ENCODE measurements at regions of chr6 and their contacts with region 1.

Region 1: DNA sequence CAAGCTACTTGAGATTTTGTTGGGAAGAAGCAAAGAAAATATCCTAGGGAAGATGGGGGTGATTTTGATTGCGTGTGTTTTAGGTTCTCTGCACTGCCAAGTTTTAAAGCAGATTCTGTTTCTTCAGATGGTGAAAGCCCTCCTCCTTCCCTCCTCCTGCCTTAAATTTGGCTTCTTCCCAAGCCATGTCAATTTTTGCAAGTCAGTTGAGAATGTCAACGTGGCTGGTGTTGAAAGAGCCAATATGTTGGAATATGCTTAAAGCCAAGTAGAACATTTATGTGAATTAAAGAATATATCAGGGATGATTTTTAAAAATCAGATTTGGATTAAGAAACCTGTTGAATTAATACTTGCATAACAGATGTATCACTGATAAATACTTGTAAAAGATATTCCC is 270.8 kb downstream of the ARID1B start:
- DNase-seq: no peak
- H3K4me3 ChIP-seq: no peak overlapping the region
- H3K4me3 Mint-ChIP-seq: no peak overlapping the region
- H3K27ac ChIP-seq: peak overlapping the region in 1 of 2 donors; percentile 1
- H3K27ac Mint-ChIP-seq: peak overlapping the region in 1 of 7 donors; percentile 50
- H3K4me1 ChIP-seq: peaks cover 5 to 7% of the 10 kb centered on the region in 2 donors
- H3K4me1 Mint-ChIP-seq: peaks cover 13% of the 10 kb centered on the region
- H3K27me3 ChIP-seq: no peaks in the 10 kb centered on the region
- H3K27me3 Mint-ChIP-seq: no peaks in the 10 kb centered on the region
- CTCF ChIP-seq: no peak

Region 2: DNA sequence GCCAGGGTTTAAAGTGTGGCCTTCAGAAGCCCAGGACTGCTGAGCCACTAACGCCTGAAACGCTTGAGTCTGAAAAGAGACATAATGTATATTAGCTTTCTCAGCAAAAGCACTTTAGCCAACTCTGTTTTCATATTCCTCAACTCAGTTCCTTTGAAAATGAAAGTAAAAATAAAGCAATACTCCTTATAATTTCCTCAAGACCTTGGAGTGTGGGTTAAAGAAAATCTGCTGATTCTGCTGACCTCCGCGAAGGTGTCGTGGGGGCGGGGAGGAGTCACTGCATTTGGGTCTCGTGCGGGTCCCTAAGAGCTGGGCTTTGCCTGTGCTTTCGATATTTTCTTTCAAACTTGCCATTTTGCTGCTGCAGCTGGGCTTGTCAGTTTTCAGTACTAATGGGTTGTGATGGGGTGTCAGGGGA is 413.0 kb before region 1 on chr6:
- intact Hi-C with region 1: no loop called
- DNase-seq: no peak
- H3K4me3 ChIP-seq: peak overlapping the region; percentile 0 to 60 (median 27)
- H3K4me3 Mint-ChIP-seq: peak overlapping the region; percentile 74 to 91
- H3K27ac ChIP-seq: peak overlapping the region in 1 of 2 donors; percentile 46
- H3K27ac Mint-ChIP-seq: peak overlapping the region in 3 of 7 donors; percentile 50 to 81 (median 51)
- H3K4me1 ChIP-seq: peaks cover 0 to 15% of the 10 kb centered on the region in 2 donors
- H3K4me1 Mint-ChIP-seq: peaks cover 16% of the 10 kb centered on the region
- H3K27me3 ChIP-seq: no peaks in the 10 kb centered on the region
- H3K27me3 Mint-ChIP-seq: peaks cover 0 to 2% (median 0%) of the 10 kb centered on the region in 3 donors
- CTCF ChIP-seq: no peak

Region 3: GRCh38 chr6:157029980-157030690 is 17.8 kb before region 1 on chr6:
- intact Hi-C with region 1: loop called in 1 of 2 experiments (anchors 1 kb)
- DNase-seq: no peak
- H3K4me3 ChIP-seq: no peak overlapping the region
- H3K4me3 Mint-ChIP-seq: no peak overlapping the region
- H3K27ac ChIP-seq: no peak overlapping the region
- H3K27ac Mint-ChIP-seq: no peak overlapping the region
- H3K4me1 ChIP-seq: peaks cover 2 to 18% of the 10 kb centered on the region in 2 donors
- H3K4me1 Mint-ChIP-seq: peaks cover 16% of the 10 kb centered on the region
- H3K27me3 ChIP-seq: no peaks in the 10 kb centered on the region
- H3K27me3 Mint-ChIP-seq: no peaks in the 10 kb centered on the region
- CTCF ChIP-seq: no peak

Region 4: GRCh38 chr6:157198419-157199279 is 150.7 kb after region 1 on chr6:
- intact Hi-C with region 1: no loop called
- DNase-seq: no peak
- H3K4me3 ChIP-seq: no peak overlapping the region
- H3K4me3 Mint-ChIP-seq: no peak overlapping the region
- H3K27ac ChIP-seq: no peak overlapping the region
- H3K27ac Mint-ChIP-seq: no peak overlapping the region
- H3K4me1 ChIP-seq: no peaks in the 10 kb centered on the region
- H3K4me1 Mint-ChIP-seq: no peaks in the 10 kb centered on the region
- H3K27me3 ChIP-seq: no peaks in the 10 kb centered on the region
- H3K27me3 Mint-ChIP-seq: no peaks in the 10 kb centered on the region
- CTCF ChIP-seq: no peak

Measured in CD14-positive monocyte (primary cell).